ENCODE measurements at regions of chr5 and their contacts with region 1.

Region 1: DNA sequence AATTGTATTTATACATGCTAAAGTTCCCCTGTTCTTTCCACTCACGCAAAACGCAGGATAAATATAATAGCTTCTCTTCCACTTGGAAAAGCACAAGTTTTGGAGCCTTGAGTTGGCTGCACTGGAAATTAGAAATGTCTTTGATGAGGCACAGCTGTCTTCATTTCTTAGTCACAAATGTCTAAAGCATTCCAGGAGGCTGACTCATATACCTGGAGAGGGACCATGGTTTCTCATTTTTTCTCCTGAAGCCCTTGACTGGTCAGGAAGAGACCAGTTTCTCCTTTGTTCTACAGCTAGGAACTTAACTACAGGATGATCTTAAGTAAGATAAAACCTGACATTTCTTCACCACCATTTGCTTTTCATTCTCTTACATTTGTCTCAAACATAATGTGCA is 16.2 kb downstream of the MTX3 start:
- DNase-seq: no peak
- ATAC-seq: peak in 6 of 8 donors; percentile 40 to 69 (median 60)
- H3K4me3 ChIP-seq: no peak overlapping the region
- H3K27ac ChIP-seq: peak overlapping the region in 1 of 10 donors; percentile 54
- H3K4me1 ChIP-seq: peaks cover 0 to 9% (median 0%) of the 10 kb centered on the region in 9 donors
- H3K27me3 ChIP-seq: no peaks in the 10 kb centered on the region
- CTCF ChIP-seq: no peak

Region 2: GRCh38 chr5:79011219-79011836 is 963.6 kb before region 1 on chr5:
- intact Hi-C with region 1: no loop called
- DNase-seq: no peak
- ATAC-seq: no peak
- H3K4me3 ChIP-seq: no peak overlapping the region
- H3K27ac ChIP-seq: no peak overlapping the region
- H3K4me1 ChIP-seq: no peaks in the 10 kb centered on the region
- H3K27me3 ChIP-seq: peaks cover 0 to 4% (median 0%) of the 10 kb centered on the region in 7 donors
- CTCF ChIP-seq: no peak

Region 3: DNA sequence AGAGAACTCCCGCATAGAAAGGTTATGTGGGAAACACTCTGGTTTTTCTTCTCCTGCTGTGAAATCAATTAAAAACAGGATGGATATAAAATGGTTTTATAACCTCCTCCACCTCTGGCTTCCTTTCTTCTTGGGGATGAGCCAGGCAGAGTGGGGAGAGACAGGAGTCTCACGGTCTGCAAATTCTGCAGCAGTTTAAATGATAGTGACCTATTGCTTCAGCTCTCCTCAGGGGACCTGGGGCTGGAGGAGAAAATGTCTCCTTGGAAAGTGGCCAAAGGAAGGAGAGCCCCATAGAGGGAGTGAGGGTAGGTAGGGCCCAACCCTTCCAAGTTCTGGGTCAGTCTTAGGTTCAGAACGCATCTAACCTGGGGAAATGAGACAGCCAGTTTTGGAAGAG is 102.6 kb before region 1 on chr5:
- intact Hi-C with region 1: loop called in 2 of 10 experiments (anchors 5 to 10 kb)
- DNase-seq: peak in 1 of 2 donors; percentile 72
- ATAC-seq: peak; percentile 54 to 86 (median 70)
- H3K4me3 ChIP-seq: no peak overlapping the region
- H3K27ac ChIP-seq: peak overlapping the region in 6 of 10 donors; percentile 13 to 83 (median 62)
- H3K4me1 ChIP-seq: peaks cover 0 to 57% (median 18%) of the 10 kb centered on the region in 9 donors
- H3K27me3 ChIP-seq: no peaks in the 10 kb centered on the region
- CTCF ChIP-seq: no peak

Region 4: DNA sequence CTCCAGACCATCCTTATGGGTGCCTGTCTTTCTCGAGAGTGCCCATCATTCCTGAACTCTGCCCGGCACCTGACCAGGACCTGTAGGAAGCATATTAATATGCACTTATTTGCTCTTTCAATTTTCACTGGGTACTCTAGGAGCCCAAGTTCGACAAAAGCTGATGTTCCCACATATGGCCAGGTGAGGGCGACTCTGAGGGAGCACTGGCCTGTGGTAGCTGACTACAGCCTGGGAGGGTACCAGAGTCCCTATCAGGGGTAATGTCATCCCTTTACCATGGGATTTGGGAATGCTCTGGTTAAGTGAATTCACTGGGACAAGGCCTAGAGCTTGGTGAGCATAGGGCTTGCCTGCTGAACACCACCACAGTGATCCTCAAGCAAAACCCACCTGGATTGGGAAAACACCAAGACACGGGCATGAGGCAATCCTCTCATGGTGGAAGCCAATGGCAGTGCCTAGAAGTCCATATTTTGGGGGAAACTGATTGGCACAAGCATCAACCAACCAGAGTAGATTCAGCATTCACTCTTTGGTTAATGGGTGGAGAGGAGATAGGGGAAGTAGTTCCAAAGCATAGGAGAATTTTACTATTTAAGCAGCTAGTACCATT is 96.1 kb before region 1 on chr5:
- intact Hi-C with region 1: loop called in 2 of 10 experiments (anchors 5 to 10 kb)
- DNase-seq: no peak
- ATAC-seq: no peak
- H3K4me3 ChIP-seq: no peak overlapping the region
- H3K27ac ChIP-seq: no peak overlapping the region
- H3K4me1 ChIP-seq: peaks cover 0 to 25% (median 6%) of the 10 kb centered on the region in 9 donors
- H3K27me3 ChIP-seq: no peaks in the 10 kb centered on the region
- CTCF ChIP-seq: peak in 6 of 9 donors; percentile 18 to 42 (median 34)

Region 5: DNA sequence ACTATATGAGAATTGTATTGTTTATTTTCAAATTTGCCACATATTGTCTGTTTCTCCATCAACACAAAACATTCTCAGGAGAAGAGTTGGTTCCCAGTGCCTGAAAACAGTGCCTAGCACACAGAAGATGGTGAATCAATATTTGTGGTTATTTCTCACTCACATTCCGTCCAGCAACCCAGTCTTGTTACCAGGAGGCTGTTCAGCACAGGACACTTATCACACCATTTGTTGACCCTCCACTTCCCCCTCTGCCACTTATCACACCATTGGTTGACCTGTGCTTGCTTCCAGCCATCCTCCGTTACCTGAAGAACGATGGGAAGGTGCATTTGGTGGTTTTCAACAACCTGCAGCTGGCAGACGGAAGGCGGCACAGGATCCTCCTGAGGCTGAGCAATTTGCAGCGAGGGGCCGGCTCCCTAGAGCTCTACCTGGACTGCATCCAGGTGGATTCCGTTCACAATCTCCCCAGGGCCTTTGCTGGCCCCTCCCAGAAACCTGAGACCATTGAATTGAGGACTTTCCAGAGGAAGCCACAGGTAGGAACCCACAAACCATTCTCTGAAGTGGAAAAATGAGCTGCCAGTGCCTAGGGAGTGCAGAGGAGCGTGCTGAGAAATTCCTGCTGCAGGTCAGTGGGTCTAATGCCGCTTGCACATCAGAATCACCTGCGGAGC is 80.7 kb after region 1 on chr5:
- intact Hi-C with region 1: no loop called
- DNase-seq: no peak
- ATAC-seq: no peak
- H3K4me3 ChIP-seq: no peak overlapping the region
- H3K27ac ChIP-seq: no peak overlapping the region
- H3K4me1 ChIP-seq: peaks cover 0 to 10% (median 0%) of the 10 kb centered on the region in 9 donors
- H3K27me3 ChIP-seq: no peaks in the 10 kb centered on the region
- CTCF ChIP-seq: no peak

Region 6: GRCh38 chr5:80591352-80591751 is 616.5 kb after region 1 on chr5:
- intact Hi-C with region 1: no loop called
- DNase-seq: no peak
- ATAC-seq: no peak
- H3K4me3 ChIP-seq: no peak overlapping the region
- H3K27ac ChIP-seq: no peak overlapping the region
- H3K4me1 ChIP-seq: no peaks in the 10 kb centered on the region
- H3K27me3 ChIP-seq: peaks cover 0 to 6% (median 0%) of the 10 kb centered on the region in 7 donors
- CTCF ChIP-seq: no peak

Measured in heart right ventricle (tissue), 16 donors.